Caco-2 (cell line): ENCODE measurements at regions of chr17 and their contacts with region 1.

Region 1: GRCh38 chr17:18855831-18856569 is 1.9 kb upstream of the PRPSAP2 start:
- DNase-seq: peak; percentile 92 to 94
- H3K4me3 ChIP-seq: peak overlapping the region; percentile 54
- H3K4me3 Mint-ChIP-seq: peak overlapping the region; percentile 89
- H3K27ac Mint-ChIP-seq: peak overlapping the region; percentile 81
- H3K4me1 ChIP-seq: no peaks in the 10 kb centered on the region
- H3K4me1 Mint-ChIP-seq: peaks cover 25% of the 10 kb centered on the region
- H3K27me3 ChIP-seq: no peaks in the 10 kb centered on the region
- H3K27me3 Mint-ChIP-seq: no peaks in the 10 kb centered on the region
- CTCF ChIP-seq: no peak

Region 2: GRCh38 chr17:18877104-18877503 is 21.1 kb after region 1 on chr17:
- CTCF ChIA-PET with region 1: no interaction called
- POLR2A ChIA-PET with region 1: no interaction called
- intact Hi-C with region 1: loop called (anchors 1 kb)
- DNase-seq: peak in 1 of 2 experiments; percentile 13
- H3K4me3 ChIP-seq: no peak overlapping the region
- H3K4me3 Mint-ChIP-seq: no peak overlapping the region
- H3K27ac Mint-ChIP-seq: peak overlapping the region; percentile 27
- H3K4me1 ChIP-seq: peaks cover 19% of the 10 kb centered on the region
- H3K4me1 Mint-ChIP-seq: peaks cover 15% of the 10 kb centered on the region
- H3K27me3 ChIP-seq: no peaks in the 10 kb centered on the region
- H3K27me3 Mint-ChIP-seq: no peaks in the 10 kb centered on the region
- CTCF ChIP-seq: no peak

Region 3: GRCh38 chr17:18937981-18938691 is 82.1 kb after region 1 on chr17:
- CTCF ChIA-PET with region 1: no interaction called
- POLR2A ChIA-PET with region 1: no interaction called
- intact Hi-C with region 1: loop called (anchors 5 kb)
- DNase-seq: no peak
- H3K4me3 ChIP-seq: no peak overlapping the region
- H3K4me3 Mint-ChIP-seq: no peak overlapping the region
- H3K27ac Mint-ChIP-seq: peak overlapping the region; percentile 34
- H3K4me1 ChIP-seq: peaks cover 9% of the 10 kb centered on the region; the same call in 1 of the 2 replicates
- H3K4me1 Mint-ChIP-seq: peaks cover 11% of the 10 kb centered on the region
- H3K27me3 ChIP-seq: no peaks in the 10 kb centered on the region
- H3K27me3 Mint-ChIP-seq: no peaks in the 10 kb centered on the region
- CTCF ChIP-seq: no peak